ENCODE measurements at regions of chr16 and their contacts with region 1.

Region 1: DNA sequence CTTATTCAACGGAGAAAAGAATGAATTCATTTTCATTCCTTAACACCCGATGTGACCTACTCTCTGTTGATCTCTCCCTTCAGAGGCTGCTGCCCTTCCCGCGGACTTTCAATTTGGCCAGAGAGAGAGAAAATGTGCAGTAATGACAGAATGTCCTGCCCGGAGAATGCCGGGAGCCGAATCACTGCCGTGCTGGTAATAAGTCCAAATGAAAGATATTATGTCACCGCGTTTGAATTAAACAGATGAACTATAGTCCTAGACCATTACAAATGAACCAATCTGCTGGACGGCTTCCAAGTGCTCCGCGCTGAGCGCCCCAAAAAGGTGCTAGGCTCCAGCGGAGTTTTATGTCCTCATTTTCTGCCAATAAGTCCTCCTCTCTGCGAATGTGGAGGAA is 14.7 kb upstream of the C16orf82 start:
- DNase-seq: no peak
- H3K27ac ChIP-seq: no peak overlapping the region
- CTCF ChIP-seq: no peak

Region 2: DNA sequence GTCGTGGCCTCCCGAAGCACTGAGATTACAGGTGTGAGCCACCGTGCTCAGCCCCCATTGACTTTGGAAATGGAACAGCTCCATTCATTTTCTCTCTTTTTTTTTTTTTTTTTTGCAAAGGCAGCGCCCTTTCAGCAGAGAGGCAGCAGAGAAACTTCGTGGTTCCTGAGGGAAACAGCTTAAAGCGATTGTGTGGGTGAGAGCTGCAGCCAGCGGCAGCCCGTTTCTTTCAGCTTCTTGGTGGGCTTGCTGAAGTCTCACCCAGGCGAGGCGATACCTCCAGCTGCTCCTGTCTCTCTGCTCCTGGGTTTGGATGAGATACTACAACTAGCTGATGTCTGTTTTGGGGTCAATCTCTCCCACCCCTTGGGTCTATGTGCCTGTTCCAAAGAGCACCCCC is 159.0 kb after region 1 on chr16:
- CTCF ChIA-PET with region 1: interaction called, 11 read pairs
- POLR2A ChIA-PET with region 1: no interaction called
- DNase-seq: no peak
- H3K27ac ChIP-seq: no peak overlapping the region
- CTCF ChIP-seq: no peak

Measured in RWPE1 (cell line).